Dorsolateral prefrontal cortex (tissue), 120 donors: ENCODE measurements at regions of chr9 and their contacts with region 1.

Region 1: GRCh38 chr9:131008909-131009618 is at the start of gene LAMC3:
- DNase-seq: no peak
- H3K4me3 ChIP-seq: peak within 1 kb of the TSS in 58 of 59 donors; percentile 15 to 61 (median 42)
- H3K27ac ChIP-seq: peak within 1 kb of the TSS in 1 of 59 donors; percentile 42
- H3K27me3 ChIP-seq: peaks cover 0 to 22% (median 4%) of the 10 kb centered on the region in 45 donors
- CTCF ChIP-seq: peak in 53 of 56 donors; percentile 6 to 66 (median 43)
- total RNA-seq, gene LAMC3: 1.4 to 14.2 (median 4.7) TPM

Region 2: DNA sequence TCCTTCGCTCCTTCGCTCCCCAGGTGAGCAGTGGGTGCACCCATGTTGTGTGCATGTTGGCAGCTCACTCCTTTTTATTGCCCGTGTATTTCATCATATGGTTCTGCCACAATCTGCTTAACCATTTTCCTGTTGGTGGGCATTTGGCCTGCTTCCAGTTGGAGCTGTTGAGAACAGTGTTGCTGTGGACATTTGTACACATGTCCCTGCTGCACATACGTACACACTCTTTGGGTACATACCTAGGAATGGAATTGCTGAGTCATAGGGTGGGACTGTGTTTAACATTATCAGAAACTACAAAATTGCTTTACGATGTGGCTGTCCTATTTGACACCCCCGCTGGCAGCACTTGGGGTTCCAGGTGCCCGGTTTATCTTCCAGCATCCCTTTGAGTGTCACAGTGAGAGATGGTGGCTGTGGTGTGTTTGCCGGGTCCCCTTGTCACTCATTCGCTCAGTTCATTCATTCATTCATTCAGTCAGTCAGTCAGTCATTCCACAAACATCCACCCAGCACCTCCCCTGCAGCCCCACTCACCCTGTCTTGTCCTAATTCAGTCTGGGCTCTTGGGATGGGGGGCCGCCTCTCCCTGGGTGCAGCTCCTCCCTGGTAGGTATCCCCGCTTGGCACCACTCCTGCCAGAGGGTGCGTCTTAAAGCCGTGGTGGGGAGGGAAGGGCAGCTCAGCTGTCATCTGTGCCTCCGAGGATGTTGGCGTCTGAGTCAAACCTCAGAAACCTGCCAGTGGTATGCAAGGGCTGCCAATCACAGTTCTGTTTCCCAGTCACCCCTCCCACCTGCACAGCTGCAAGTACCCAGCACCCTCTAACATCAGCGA is 62.1 kb before region 1 on chr9:
- intact Hi-C with region 1: loop called in 1 of 2 experiments (anchors 5 kb)
- DNase-seq: no peak
- H3K4me3 ChIP-seq: no peak overlapping the region
- H3K27ac ChIP-seq: no peak overlapping the region
- H3K27me3 ChIP-seq: peaks cover 0 to 9% (median 0%) of the 10 kb centered on the region in 45 donors
- CTCF ChIP-seq: no peak

Region 3: DNA sequence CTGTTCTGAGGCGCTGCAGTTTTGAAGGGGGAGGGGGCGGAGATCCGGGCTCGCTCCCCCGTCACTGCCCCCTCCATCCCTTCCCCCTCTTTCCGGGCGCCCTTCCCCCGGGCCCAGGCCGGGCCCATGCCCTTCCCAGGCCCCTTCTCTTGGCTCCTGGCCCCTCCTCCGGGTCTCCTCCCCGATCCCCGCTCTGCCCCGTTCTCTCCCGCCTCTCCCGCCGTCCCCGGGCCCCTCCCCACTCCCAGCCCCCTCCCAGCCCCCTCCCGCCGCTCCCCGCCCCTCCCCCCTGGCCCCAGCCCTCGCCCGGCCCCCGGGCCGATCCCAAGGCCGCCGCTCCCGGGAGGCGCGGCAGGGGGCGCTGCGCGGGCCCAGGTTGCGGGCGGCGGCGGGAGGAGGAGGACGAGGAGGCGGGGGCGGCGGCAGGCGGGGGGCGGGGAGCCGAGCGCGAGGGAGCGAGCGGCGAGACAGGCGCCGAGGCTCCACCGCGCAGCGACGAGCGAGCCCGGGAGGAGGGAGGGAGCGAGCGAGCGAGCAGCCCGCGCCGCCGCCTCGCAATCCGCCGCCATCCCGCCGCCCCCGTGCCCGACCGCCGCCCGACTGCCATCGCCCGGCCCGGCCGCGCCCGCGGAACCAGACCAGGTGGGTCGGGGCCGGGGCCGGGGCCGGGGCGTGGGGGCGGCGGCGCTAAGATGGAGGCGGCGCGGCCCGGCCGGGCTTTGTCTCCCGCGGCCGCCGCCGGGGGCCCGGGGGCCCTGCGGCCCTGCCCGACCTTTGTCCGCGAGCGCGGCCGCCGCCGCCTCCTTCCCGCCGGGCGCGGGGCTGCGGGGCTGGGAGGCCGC is 384.8 kb after region 1 on chr9 and contains the start of gene PRRC2B:
- intact Hi-C with region 1: no loop called
- DNase-seq: peak in 8 of 10 donors; percentile 55 to 86 (median 76)
- H3K4me3 ChIP-seq: peak within 1 kb of the TSS; percentile 45 to 81 (median 68)
- H3K27ac ChIP-seq: peak within 1 kb of the TSS; percentile 65 to 98 (median 93)
- H3K27me3 ChIP-seq: no peaks in the 10 kb centered on the region
- CTCF ChIP-seq: peak in 45 of 56 donors; percentile 6 to 81 (median 50)
- total RNA-seq, gene PRRC2B: 234 to 434 (median 347) TPM